ENCODE measurements at regions of chr4 and their contacts with region 1.

Region 1: GRCh38 chr4:163332500-163333406 is at the start of gene NPY1R:
- DNase-seq: peak; percentile 70 to 76
- H3K4me3 ChIP-seq: peak within 1 kb of the TSS; percentile 44
- H3K4me3 Mint-ChIP-seq: peak within 1 kb of the TSS; percentile 87
- H3K27ac Mint-ChIP-seq: no peak within 1 kb of the TSS
- H3K4me1 ChIP-seq: no peaks in the 10 kb centered on the region
- H3K4me1 Mint-ChIP-seq: peaks cover 7% of the 10 kb centered on the region
- H3K27me3 ChIP-seq: no peaks in the 10 kb centered on the region
- H3K27me3 Mint-ChIP-seq: peaks cover 21% of the 10 kb centered on the region
- CTCF ChIP-seq: peak; percentile 74 to 85
- total RNA-seq, gene NPY1R: 1.5 and 3.3 TPM in 2 replicates

Region 2: GRCh38 chr4:162645381-162645780 is 687.4 kb before region 1 on chr4:
- CTCF ChIA-PET with region 1: interaction called, 7 read pairs
- POLR2A ChIA-PET with region 1: no interaction called
- intact Hi-C with region 1: loop called (anchors 1 kb)
- DNase-seq: peak in 1 of 2 experiments; percentile 19
- H3K4me3 ChIP-seq: no peak overlapping the region
- H3K4me3 Mint-ChIP-seq: no peak overlapping the region
- H3K27ac Mint-ChIP-seq: no peak overlapping the region
- H3K4me1 ChIP-seq: no peaks in the 10 kb centered on the region
- H3K4me1 Mint-ChIP-seq: no peaks in the 10 kb centered on the region
- H3K27me3 ChIP-seq: no peaks in the 10 kb centered on the region
- H3K27me3 Mint-ChIP-seq: peaks cover 3% of the 10 kb centered on the region
- CTCF ChIP-seq: peak; percentile 26 to 76

Region 3: GRCh38 chr4:163048447-163048846 is 284.3 kb before region 1 on chr4:
- CTCF ChIA-PET with region 1: no interaction called
- POLR2A ChIA-PET with region 1: no interaction called
- intact Hi-C with region 1: loop called (anchors 1 kb)
- DNase-seq: peak in 1 of 2 experiments; percentile 27
- H3K4me3 ChIP-seq: no peak overlapping the region
- H3K4me3 Mint-ChIP-seq: no peak overlapping the region
- H3K27ac Mint-ChIP-seq: no peak overlapping the region
- H3K4me1 ChIP-seq: peaks cover 3% of the 10 kb centered on the region; the same call in 1 of the 2 replicates
- H3K4me1 Mint-ChIP-seq: peaks cover 6% of the 10 kb centered on the region
- H3K27me3 ChIP-seq: no peaks in the 10 kb centered on the region
- H3K27me3 Mint-ChIP-seq: no peaks in the 10 kb centered on the region
- CTCF ChIP-seq: peak; percentile 42 to 47

Region 4: DNA sequence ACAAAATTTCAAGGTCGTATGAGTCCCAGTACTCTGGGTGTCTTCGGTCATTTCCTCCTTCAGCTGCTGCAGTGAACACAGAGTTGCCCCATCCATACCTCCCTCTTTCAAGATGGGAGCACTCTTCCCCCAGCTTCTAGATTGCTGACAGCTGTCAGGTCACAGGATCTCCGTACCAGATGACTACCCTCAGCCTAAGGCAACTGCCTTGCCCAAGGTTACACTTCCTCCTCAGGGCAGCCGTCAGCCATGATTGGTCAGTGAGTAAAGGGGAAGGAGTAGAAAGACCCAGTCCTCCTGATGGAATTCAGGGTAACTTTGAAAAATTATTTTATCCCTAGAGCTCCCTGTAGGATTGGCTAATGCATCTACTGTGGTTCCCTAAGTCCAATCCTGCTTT is 247.7 kb before region 1 on chr4:
- CTCF ChIA-PET with region 1: no interaction called
- POLR2A ChIA-PET with region 1: no interaction called
- intact Hi-C with region 1: no loop called
- DNase-seq: no peak
- H3K4me3 ChIP-seq: no peak overlapping the region
- H3K4me3 Mint-ChIP-seq: no peak overlapping the region
- H3K27ac Mint-ChIP-seq: no peak overlapping the region
- H3K4me1 ChIP-seq: no peaks in the 10 kb centered on the region
- H3K4me1 Mint-ChIP-seq: no peaks in the 10 kb centered on the region
- H3K27me3 ChIP-seq: no peaks in the 10 kb centered on the region
- H3K27me3 Mint-ChIP-seq: no peaks in the 10 kb centered on the region
- CTCF ChIP-seq: no peak

Region 5: GRCh38 chr4:163107754-163108153 is 225.0 kb before region 1 on chr4:
- CTCF ChIA-PET with region 1: interaction called, 7 read pairs
- POLR2A ChIA-PET with region 1: no interaction called
- intact Hi-C with region 1: loop called (anchors 1 kb)
- DNase-seq: peak in 1 of 2 experiments; percentile 5
- H3K4me3 ChIP-seq: no peak overlapping the region
- H3K4me3 Mint-ChIP-seq: no peak overlapping the region
- H3K27ac Mint-ChIP-seq: no peak overlapping the region
- H3K4me1 ChIP-seq: no peaks in the 10 kb centered on the region
- H3K4me1 Mint-ChIP-seq: no peaks in the 10 kb centered on the region
- H3K27me3 ChIP-seq: no peaks in the 10 kb centered on the region
- H3K27me3 Mint-ChIP-seq: no peaks in the 10 kb centered on the region
- CTCF ChIP-seq: no peak

Region 6: GRCh38 chr4:163166041-163166579 is 166.6 kb before region 1 on chr4:
- CTCF ChIA-PET with region 1: interaction called, 3 read pairs
- POLR2A ChIA-PET with region 1: no interaction called
- intact Hi-C with region 1: loop called (anchors 1 kb)
- DNase-seq: peak; percentile 50 to 61
- H3K4me3 ChIP-seq: peak overlapping the region; percentile 79
- H3K4me3 Mint-ChIP-seq: peak overlapping the region; percentile 83
- H3K27ac Mint-ChIP-seq: peak overlapping the region; percentile 98
- H3K4me1 ChIP-seq: no peaks in the 10 kb centered on the region
- H3K4me1 Mint-ChIP-seq: peaks cover 21% of the 10 kb centered on the region
- H3K27me3 ChIP-seq: no peaks in the 10 kb centered on the region
- H3K27me3 Mint-ChIP-seq: no peaks in the 10 kb centered on the region
- CTCF ChIP-seq: no peak

Region 7: DNA sequence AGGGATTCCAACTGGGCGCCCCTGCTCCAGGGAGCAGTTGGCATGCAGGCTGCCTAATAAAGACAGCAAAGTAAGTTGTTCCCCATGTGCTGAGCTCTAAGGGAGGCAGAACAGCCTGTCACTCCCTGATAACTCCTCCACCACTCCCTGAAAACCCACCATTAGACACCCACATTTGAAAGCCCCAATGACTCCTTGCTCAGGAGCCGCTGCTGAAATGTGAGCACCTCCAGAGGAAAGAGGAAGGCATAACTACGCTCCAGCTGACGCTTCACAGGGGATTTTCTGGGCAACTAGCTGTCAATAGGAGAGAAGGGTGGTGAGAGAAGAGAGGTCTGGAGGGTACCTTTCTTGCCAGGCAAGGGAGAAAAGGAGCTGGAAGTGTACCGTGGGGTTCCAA is 62.9 kb before region 1 on chr4:
- CTCF ChIA-PET with region 1: interaction called, 3 read pairs
- POLR2A ChIA-PET with region 1: no interaction called
- intact Hi-C with region 1: loop called (anchors 5 kb)
- DNase-seq: no peak
- H3K4me3 ChIP-seq: no peak overlapping the region
- H3K4me3 Mint-ChIP-seq: no peak overlapping the region
- H3K27ac Mint-ChIP-seq: no peak overlapping the region
- H3K4me1 ChIP-seq: no peaks in the 10 kb centered on the region
- H3K4me1 Mint-ChIP-seq: no peaks in the 10 kb centered on the region
- H3K27me3 ChIP-seq: no peaks in the 10 kb centered on the region
- H3K27me3 Mint-ChIP-seq: no peaks in the 10 kb centered on the region
- CTCF ChIP-seq: no peak

Region 8: DNA sequence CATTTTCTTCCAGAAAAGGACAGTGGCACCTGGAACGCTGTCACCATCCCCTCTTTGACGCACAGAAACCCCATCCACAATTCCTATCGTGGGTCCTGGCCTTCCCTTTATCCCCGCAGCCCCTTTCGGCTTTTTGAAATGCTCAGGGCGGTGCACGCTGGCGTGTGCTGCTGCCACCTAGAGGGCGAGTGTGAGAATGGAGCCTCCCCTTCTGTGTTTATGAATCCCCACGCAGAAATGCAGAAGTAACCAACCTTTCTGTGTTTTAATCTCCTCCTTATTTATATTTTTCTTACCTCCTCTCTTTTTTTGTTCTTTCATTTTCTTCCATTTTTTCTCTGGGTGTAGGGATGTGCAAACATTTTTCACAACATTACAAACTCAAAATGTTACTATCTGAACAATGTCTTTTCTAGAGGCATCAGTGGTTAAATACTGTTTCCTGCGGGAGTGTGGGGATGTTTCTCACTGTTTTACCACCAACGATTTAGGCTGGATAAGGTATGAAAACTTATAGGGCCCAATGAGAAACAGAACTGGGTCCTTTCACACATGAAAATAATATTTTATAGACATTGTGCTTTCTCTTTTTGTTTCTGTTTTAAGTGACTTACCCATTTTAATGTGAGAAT is 211.8 kb after region 1 on chr4:
- CTCF ChIA-PET with region 1: no interaction called
- POLR2A ChIA-PET with region 1: no interaction called
- intact Hi-C with region 1: loop called (anchors 5 kb)
- DNase-seq: peak; percentile 50 to 55
- H3K4me3 ChIP-seq: no peak overlapping the region
- H3K4me3 Mint-ChIP-seq: no peak overlapping the region
- H3K27ac Mint-ChIP-seq: no peak overlapping the region
- H3K4me1 ChIP-seq: no peaks in the 10 kb centered on the region
- H3K4me1 Mint-ChIP-seq: no peaks in the 10 kb centered on the region
- H3K27me3 ChIP-seq: no peaks in the 10 kb centered on the region
- H3K27me3 Mint-ChIP-seq: no peaks in the 10 kb centered on the region
- CTCF ChIP-seq: peak; percentile 84 to 90